ENCODE measurements at regions of chr4 and their contacts with region 1.

Region 1: GRCh38 chr4:52983563-52984303 is 121.6 kb downstream of the RASL11B start:
- DNase-seq: no peak
- H3K4me3 ChIP-seq: no peak overlapping the region
- H3K27ac ChIP-seq: peak overlapping the region in 1 of 4 donors; percentile 11
- H3K4me1 ChIP-seq: peaks cover 0 to 23% (median 19%) of the 10 kb centered on the region in 4 donors
- H3K27me3 ChIP-seq: no peaks in the 10 kb centered on the region
- CTCF ChIP-seq: peak; percentile 59 to 74 (median 64)
- EP300 ChIP-seq: no peak
- POLR2A ChIP-seq: no peak

Region 2: DNA sequence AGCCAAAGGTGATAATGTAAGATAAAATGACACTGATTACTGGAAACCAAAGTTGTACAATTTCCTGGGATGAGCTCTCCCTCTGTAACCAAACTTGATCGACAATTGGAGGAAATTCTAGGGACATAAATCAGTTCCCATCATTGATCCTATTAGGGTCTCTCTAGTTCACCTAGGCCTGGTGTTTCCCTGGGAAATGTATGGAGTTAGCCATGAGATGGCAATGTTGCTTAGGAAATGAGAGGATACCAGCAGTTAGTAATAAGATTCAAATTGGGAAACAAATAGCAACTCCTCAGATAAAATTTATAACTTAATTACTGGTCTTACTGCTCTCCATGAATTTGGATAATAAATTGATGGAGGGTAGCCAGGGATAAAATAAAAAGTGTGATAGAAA is 880.4 kb before region 1 on chr4:
- intact Hi-C with region 1: loop called (anchors 10 kb)
- DNase-seq: no peak
- H3K4me3 ChIP-seq: no peak overlapping the region
- H3K27ac ChIP-seq: no peak overlapping the region
- H3K4me1 ChIP-seq: peaks cover 0 to 5% (median 1%) of the 10 kb centered on the region in 4 donors
- H3K27me3 ChIP-seq: no peaks in the 10 kb centered on the region
- CTCF ChIP-seq: peak in 2 of 3 experiments; percentile 19 to 38
- EP300 ChIP-seq: no peak
- POLR2A ChIP-seq: no peak

Region 3: DNA sequence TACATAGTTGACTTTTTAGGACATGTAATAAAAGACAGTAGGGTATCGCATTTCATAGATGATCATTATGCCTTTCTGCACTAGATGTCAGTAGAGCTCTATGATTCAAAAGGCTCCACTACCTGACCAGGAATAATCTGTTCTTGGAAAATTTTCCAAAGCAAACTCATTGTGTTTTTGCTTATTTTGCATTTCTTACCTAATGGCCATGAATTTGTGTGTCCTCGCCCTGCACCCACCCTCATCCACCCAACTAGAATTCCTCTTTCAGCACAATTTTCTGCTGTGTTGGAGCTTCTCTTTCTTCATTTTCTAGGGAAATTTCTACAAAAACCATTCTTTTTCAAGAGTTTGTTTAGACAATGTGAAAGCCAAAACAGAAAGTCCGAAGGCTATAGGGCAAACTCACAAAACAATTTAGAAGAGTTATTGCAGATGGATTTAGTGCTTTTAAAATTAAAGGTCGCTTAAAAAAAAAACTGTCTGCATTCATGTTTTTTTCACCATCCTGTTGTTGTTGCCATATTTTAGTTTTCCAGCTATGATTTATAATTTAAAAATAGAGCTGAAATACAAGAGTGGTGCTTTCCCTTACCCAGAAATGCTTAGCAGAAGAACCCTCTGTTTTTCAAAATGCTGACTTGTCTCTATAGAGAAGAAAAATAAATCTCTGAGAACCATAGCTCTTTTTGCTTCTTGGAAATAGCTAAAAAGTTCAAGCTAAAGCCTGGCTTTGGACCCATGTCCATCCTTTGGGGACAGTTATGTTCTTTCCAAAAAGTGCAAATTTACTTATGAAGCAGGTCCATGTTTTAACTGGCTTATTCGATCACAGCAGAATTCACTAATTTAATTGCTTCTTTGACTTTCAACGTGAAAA is 748.9 kb before region 1 on chr4:
- intact Hi-C with region 1: loop called (anchors 5 kb)
- DNase-seq: no peak
- H3K4me3 ChIP-seq: no peak overlapping the region
- H3K27ac ChIP-seq: no peak overlapping the region
- H3K4me1 ChIP-seq: peaks cover 0 to 10% (median 2%) of the 10 kb centered on the region in 4 donors
- H3K27me3 ChIP-seq: no peaks in the 10 kb centered on the region
- CTCF ChIP-seq: peak; percentile 43 to 58 (median 44)
- EP300 ChIP-seq: no peak
- POLR2A ChIP-seq: no peak

Region 4: DNA sequence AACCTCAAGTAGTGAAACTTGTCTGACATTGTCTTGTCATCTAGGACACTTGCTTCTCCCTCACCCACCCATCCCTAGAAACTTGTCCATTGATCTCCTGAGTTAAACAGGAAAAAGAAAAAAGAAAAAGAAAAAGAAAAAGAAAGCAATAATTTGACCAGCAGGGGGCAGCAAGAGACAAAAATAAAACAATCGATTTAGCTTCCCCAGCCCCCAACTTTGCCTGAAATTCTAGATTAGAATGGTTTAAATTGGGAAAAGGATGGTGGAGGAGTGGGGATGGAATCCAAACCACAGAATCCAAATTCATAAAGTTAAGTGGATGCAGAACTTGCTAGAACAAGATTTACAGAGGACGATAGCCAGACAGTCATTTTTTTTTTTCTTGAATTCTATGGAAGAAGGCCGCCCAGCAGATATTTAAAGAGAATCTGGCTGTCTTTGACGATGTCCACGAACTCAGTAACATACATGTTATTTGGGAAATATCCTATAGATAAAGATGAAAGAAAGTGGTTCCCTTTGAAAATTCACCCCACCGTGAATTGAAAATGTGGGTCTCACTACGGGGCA is 607.5 kb before region 1 on chr4:
- intact Hi-C with region 1: loop called (anchors 5 kb)
- DNase-seq: no peak
- H3K4me3 ChIP-seq: no peak overlapping the region
- H3K27ac ChIP-seq: no peak overlapping the region
- H3K4me1 ChIP-seq: no peaks in the 10 kb centered on the region
- H3K27me3 ChIP-seq: no peaks in the 10 kb centered on the region
- CTCF ChIP-seq: peak; percentile 53 to 63 (median 53)
- EP300 ChIP-seq: no peak
- POLR2A ChIP-seq: no peak

Region 5: DNA sequence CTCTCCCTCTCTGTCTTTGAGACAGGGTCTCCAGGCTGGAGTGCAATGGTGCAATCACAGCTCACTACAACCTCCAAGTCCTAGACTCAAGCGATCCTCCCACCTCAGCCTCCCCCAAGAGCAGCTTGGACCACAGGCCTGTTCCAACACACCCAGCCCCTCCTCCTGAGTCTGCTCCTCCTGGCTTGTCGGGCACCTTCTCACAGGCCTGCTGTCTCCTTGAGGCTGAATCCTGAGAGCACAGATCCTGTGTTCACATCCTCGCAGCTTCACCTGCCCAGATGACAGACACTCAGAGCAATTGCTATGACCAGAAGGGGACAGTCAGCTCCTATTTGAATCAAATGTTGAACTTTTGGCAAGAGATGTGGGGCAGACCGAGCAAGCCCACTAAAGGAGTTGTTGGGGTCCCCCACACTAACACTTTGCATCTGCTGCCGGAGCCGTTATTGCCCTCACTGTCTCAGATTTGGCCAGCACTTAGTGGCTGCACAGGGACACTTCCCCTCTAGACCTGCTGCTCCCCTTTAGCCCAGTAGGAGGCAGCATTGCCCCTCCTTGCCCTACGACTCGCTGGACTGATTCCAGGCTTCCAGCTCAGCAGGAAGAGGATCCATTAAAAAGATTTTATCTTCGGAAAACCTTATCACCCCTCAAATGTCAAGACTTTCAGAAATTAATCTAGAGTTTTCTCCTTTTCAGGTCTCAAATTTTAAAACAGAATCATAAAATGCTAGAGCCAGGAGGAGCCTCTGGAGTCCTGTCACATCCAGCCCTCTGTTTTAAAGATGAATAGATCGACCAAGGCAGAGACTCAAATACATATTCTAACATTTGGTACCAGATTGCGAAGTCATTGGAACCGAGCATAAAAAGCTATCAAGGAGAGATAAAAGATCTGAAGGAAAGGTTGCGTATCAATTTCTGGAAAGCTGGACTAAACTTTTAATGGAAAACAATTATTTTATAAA is 438.3 kb before region 1 on chr4:
- intact Hi-C with region 1: loop called (anchors 2 kb)
- DNase-seq: peak; percentile 91
- H3K4me3 ChIP-seq: no peak overlapping the region
- H3K27ac ChIP-seq: no peak overlapping the region
- H3K4me1 ChIP-seq: peaks cover 0 to 3% (median 0%) of the 10 kb centered on the region in 4 donors
- H3K27me3 ChIP-seq: no peaks in the 10 kb centered on the region
- CTCF ChIP-seq: peak; percentile 79 to 95 (median 80)
- EP300 ChIP-seq: no peak
- POLR2A ChIP-seq: no peak

Region 6: GRCh38 chr4:52712172-52712990 is 271.4 kb before region 1 on chr4:
- intact Hi-C with region 1: loop called (anchors 10 kb)
- DNase-seq: peak; percentile 99
- H3K4me3 ChIP-seq: peak overlapping the region; percentile 91 to 95 (median 94)
- H3K27ac ChIP-seq: peak overlapping the region; percentile 93 to 97 (median 95)
- H3K4me1 ChIP-seq: peaks cover 20 to 41% (median 34%) of the 10 kb centered on the region in 4 donors
- H3K27me3 ChIP-seq: no peaks in the 10 kb centered on the region
- CTCF ChIP-seq: no peak
- EP300 ChIP-seq: no peak
- POLR2A ChIP-seq: peak; percentile 77

Region 7: DNA sequence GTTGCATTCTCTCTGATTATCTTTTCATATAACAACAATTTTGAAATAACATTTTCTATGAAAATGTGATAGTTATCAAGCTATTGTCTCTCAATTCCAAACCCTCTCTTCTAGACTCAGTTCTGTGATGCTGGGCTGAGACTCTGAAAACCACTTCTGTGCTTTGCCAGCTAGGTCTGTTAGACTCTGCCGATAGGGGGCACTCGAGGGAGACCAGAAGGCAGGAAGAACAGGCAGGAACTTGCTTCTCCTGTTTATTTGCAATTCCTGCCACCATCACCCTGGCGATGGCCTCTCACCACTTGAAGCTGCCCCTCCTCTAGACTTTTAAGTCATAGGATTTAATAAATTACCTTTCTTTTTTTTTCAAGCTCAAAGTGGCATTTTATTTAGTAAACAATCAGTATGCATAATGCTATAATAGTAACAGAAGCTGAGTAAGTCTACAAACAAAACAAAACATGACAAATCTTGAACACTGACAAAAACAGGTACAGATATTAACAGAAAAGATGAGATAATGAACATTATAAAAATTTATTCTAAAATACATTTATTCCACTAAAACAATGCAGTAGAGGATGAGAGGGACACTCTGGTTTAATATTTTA is 71.9 kb before region 1 on chr4:
- intact Hi-C with region 1: loop called (anchors 10 kb)
- DNase-seq: no peak
- H3K4me3 ChIP-seq: no peak overlapping the region
- H3K27ac ChIP-seq: no peak overlapping the region
- H3K4me1 ChIP-seq: peaks cover 0 to 6% (median 2%) of the 10 kb centered on the region in 4 donors
- H3K27me3 ChIP-seq: no peaks in the 10 kb centered on the region
- CTCF ChIP-seq: peak; percentile 36 to 71 (median 50)
- EP300 ChIP-seq: no peak
- POLR2A ChIP-seq: no peak